ENCODE measurements at regions of chr5 and their contacts with region 1.

Region 1: GRCh38 chr5:177454397-177455035 is 7.9 kb downstream of the PRR7 start:
- DNase-seq: peak; percentile 92
- H3K4me3 ChIP-seq: peak overlapping the region; percentile 58 to 71 (median 62)
- H3K27ac ChIP-seq: peak overlapping the region in 2 of 3 donors; percentile 38 to 72
- H3K4me1 ChIP-seq: peaks cover 10 to 15% of the 10 kb centered on the region in 2 donors
- H3K27me3 ChIP-seq: no peaks in the 10 kb centered on the region
- CTCF ChIP-seq: peak; percentile 58 to 97 (median 93)
- POLR2A ChIP-seq: no peak

Region 2: GRCh38 chr5:177317959-177318377 is 136.5 kb before region 1 on chr5:
- intact Hi-C with region 1: loop called (anchors 5 kb)
- DNase-seq: peak; percentile 81 to 85
- H3K4me3 ChIP-seq: no peak overlapping the region
- H3K27ac ChIP-seq: no peak overlapping the region
- H3K4me1 ChIP-seq: no peaks in the 10 kb centered on the region
- H3K27me3 ChIP-seq: no peaks in the 10 kb centered on the region
- CTCF ChIP-seq: peak; percentile 74 to 86 (median 83)
- POLR2A ChIP-seq: no peak

Region 3: DNA sequence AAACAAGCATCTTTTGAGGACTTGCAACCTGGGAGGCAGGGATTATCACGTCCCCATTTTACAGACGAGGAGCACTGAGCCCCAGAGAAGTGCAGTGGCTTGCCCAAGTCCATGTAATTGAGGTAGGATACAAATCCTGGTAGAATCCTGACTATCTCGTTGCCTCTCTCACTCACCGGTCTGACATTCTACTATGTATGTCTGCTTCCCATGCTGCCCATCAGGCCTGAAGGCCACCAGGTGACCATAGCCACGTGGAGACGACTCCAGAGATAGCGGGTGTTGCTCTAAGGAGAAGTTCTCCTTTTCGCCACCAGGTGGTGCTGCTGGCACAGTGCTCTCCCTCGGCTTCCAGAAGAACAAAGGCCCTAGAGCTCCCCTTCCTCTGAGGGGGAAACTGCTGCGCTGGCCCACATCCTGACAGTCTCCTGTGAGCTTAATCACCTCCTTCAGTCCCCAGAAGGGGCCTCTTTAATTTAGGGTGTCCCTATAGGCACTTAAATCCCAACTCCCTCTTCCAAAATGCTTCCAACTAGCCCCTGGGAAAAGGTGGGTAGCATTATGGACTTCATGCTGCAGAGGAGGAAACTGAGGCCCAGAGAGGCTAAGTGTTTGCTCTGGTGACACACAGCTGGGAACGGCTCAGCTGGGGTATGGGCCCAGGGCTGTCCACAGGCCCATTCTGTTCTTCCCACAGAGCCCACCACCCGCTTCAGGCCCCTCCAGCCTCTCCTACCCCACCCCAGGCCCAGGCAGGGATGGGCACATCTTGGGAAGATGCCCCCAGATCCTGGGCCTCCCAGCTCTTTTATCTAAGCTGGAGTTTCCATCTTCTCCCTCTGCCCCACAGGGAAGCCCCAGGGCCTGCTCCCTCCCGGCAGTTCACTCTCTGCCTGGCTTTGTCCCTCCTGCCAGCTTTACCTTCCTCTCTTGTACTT is 63.9 kb before region 1 on chr5:
- intact Hi-C with region 1: loop called (anchors 5 kb)
- DNase-seq: peak; percentile 80 to 81
- H3K4me3 ChIP-seq: no peak overlapping the region
- H3K27ac ChIP-seq: no peak overlapping the region
- H3K4me1 ChIP-seq: peaks cover 3 to 20% of the 10 kb centered on the region in 2 donors
- H3K27me3 ChIP-seq: no peaks in the 10 kb centered on the region
- CTCF ChIP-seq: peak; percentile 91 to 97 (median 96)
- POLR2A ChIP-seq: no peak

Region 4: GRCh38 chr5:177403792-177404640 is 50.5 kb before region 1 on chr5:
- intact Hi-C with region 1: loop called (anchors 5 kb)
- DNase-seq: peak; percentile 83 to 85
- H3K4me3 ChIP-seq: peak overlapping the region in 2 of 3 donors; percentile 4 to 40
- H3K27ac ChIP-seq: no peak overlapping the region
- H3K4me1 ChIP-seq: peaks cover 24 to 37% of the 10 kb centered on the region in 2 donors
- H3K27me3 ChIP-seq: peaks cover 17% of the 10 kb centered on the region
- CTCF ChIP-seq: peak; percentile 49 to 78 (median 66)
- POLR2A ChIP-seq: peak in 1 of 2 donors; percentile 18

Region 5: DNA sequence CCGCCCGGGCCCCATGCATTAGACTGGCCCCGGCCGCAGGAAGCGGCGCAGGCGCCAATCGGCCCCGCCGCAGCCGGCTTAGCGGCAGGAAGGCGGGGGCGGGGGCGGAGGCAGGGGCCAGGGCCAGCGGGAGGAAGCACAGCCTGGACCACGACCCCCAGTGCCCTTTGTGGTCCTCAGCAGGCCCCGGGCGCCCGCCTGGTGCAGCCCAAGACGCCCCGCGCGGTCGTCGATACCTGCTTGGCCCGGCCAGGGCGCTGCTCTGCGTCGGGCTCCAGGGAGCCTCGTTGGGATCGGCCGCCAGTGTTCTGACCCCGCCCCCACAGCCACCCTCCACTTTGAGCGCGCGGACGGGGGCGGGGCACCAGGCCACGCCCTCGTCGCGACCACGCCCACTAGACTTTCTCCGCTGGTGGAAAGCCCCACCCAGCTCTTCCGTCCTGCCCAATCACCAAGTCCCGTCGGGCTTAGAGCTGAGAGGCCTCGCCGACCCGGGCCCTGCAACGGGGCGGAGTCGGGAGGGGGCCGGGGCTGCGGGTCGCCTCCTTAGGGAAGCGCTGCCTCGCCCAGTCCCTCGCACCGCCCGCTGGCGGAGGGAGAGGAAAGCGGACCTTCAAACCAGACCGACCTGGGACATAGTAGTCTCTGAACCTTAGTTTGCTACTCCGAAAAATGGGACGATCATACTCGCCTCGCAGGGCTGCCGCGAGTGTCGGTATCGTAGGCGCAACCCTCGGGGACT is 42.9 kb after region 1 on chr5 and contains the start of gene PDLIM7:
- intact Hi-C with region 1: loop called (anchors 2 kb)
- DNase-seq: peak; percentile 93 to 94
- H3K4me3 ChIP-seq: peak within 1 kb of the TSS; percentile 50 to 73 (median 61)
- H3K27ac ChIP-seq: peak within 1 kb of the TSS; percentile 74 to 84 (median 76)
- H3K4me1 ChIP-seq: peaks cover 19 to 51% of the 10 kb centered on the region in 2 donors
- H3K27me3 ChIP-seq: no peaks in the 10 kb centered on the region
- CTCF ChIP-seq: peak in 1 of 6 experiments; percentile 13
- POLR2A ChIP-seq: peak; percentile 77 to 97
- total RNA-seq, gene PDLIM7: 23.2 to 52.4 (median 34.8) TPM